ENCODE measurements at regions of chr2 and their contacts with region 1.

Region 1: GRCh38 chr2:169933124-169933711 is 106.0 kb downstream of the UBR3 start:
- DNase-seq: no peak
- H3K4me3 Mint-ChIP-seq: no peak overlapping the region
- H3K27ac Mint-ChIP-seq: no peak overlapping the region
- H3K4me1 Mint-ChIP-seq: no peaks in the 10 kb centered on the region
- H3K27me3 Mint-ChIP-seq: no peaks in the 10 kb centered on the region

Region 2: DNA sequence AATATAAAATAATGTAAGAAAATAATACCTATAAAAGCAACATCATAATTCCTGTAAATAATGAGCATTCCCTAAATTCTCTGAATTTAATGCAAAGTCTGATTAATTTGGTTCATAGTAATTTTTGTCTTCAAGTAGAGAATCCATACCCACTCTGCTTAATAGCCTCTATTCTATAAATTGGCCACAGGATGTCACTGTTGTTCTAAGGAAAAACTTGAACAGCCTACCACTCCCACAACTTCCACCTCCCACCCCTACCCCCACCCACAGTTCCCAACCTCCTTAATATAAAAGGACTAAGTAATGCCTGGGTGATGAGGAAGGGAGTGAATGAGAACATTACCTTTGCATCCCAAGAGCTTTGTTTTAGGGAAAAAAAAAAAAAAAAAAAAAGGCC is 481.1 kb before region 1 on chr2:
- CTCF ChIA-PET with region 1: interaction called, 4 read pairs
- POLR2A ChIA-PET with region 1: no interaction called
- intact Hi-C with region 1: loop called (anchors 1 kb)
- DNase-seq: no peak
- H3K4me3 Mint-ChIP-seq: no peak overlapping the region
- H3K27ac Mint-ChIP-seq: no peak overlapping the region
- H3K4me1 Mint-ChIP-seq: no peaks in the 10 kb centered on the region
- H3K27me3 Mint-ChIP-seq: peaks cover 5% of the 10 kb centered on the region

Region 3: GRCh38 chr2:169528271-169528701 is 404.9 kb before region 1 on chr2:
- CTCF ChIA-PET with region 1: interaction called, 4 read pairs
- POLR2A ChIA-PET with region 1: no interaction called
- intact Hi-C with region 1: loop called (anchors 1 kb)
- DNase-seq: peak; percentile 81
- H3K4me3 Mint-ChIP-seq: no peak overlapping the region
- H3K27ac Mint-ChIP-seq: no peak overlapping the region
- H3K4me1 Mint-ChIP-seq: no peaks in the 10 kb centered on the region
- H3K27me3 Mint-ChIP-seq: no peaks in the 10 kb centered on the region

Measured in activated CD4-positive, alpha-beta memory T cell treated with anti-CD3 and anti-CD28 coated beads for 36 hours (primary cell).